CD4-positive, alpha-beta memory T cell (primary cell): ENCODE measurements at regions of chr3 and their contacts with region 1.

Region 1: DNA sequence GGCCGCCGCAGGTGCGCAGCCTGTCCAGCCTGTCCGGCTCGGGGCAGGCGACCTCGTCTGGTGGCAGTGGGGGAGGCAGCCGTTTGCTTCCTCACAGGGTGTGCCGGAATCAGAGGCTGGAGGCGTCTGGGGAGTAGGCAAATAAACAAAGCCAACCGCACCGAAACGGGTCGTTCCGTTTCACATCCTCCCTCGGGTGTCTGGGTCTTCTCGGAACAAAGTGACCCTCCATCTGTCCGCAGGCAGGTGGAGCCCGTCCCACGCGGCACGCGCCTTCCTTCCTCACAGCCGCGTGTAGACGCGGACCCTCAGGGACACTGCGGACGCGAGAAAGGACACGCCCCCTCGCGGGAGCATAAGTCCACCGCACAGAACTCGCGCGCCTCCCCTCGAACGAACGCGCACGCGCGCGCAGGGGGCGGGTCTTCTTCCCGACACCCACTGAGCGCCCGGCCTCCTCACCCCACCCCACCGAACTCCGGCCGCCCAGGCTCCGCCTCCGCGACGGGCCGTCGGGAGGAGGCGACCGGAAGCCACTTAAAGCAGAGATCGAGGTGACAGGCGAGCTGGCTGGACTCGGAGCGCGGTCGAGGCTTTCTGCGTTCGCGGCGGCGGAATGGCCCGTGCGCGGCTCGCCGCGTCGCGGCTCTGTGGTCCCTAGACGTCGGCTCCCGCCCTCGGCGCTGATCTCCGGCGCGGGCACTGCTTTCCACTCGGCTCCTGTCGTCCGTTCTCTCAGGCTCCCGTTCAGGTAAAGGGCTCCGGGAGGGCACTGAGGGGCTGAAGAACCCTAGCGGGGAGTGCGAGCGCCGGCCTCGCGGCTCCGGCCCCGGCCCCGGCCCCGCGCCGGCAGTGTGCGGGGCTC is at the start of gene TIPARP:
- DNase-seq: peak; percentile 97 to 100 (median 99)
- H3K4me3 ChIP-seq: peak within 1 kb of the TSS; percentile 76 to 91
- H3K4me3 Mint-ChIP-seq: peak within 1 kb of the TSS; percentile 93 to 99 (median 96)
- H3K27ac ChIP-seq: peak within 1 kb of the TSS; percentile 94
- H3K27ac Mint-ChIP-seq: peak within 1 kb of the TSS; percentile 95 to 100 (median 99)
- H3K4me1 ChIP-seq: peaks cover 43% of the 10 kb centered on the region
- H3K4me1 Mint-ChIP-seq: peaks cover 32 to 46% (median 37%) of the 10 kb centered on the region in 4 donors
- H3K27me3 ChIP-seq: no peaks in the 10 kb centered on the region
- H3K27me3 Mint-ChIP-seq: no peaks in the 10 kb centered on the region
- total RNA-seq, gene TIPARP: 108 to 119 TPM

Region 2: DNA sequence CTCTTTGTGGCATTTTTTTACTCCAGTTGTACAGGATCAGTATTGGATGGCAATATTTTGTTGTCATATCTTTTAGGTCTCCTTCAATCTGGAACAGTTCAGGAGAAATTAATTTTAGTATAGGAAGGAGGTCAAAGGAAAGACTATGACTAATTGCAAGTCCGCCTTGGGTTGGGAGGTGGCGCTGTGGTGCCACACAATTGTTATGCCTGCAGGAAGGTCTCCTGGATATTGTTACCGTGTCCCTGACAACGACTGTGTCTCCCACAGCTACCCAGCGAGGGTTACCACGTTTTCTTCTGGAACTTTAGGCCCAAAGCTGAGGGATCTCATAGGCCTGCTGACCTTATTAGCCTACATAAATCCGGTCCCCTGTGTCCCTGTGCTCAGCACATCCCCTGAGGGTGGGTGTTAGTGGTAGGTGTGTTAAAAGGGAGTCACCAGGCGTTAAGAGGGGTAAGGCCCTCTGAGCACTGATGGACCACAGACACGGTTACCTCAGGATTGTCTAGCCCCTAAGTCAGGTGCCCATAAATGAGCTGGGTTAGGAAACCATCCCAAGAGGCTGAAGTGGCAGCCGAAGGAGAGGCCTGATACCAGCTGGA is 522.4 kb before region 1 on chr3:
- CTCF ChIA-PET with region 1: interaction called, 4 read pairs
- POLR2A ChIA-PET with region 1: no interaction called
- intact Hi-C with region 1: loop called (anchors 5 kb)
- DNase-seq: peak; percentile 40 to 56 (median 45)
- H3K4me3 ChIP-seq: no peak overlapping the region
- H3K4me3 Mint-ChIP-seq: no peak overlapping the region
- H3K27ac ChIP-seq: no peak overlapping the region
- H3K27ac Mint-ChIP-seq: peak overlapping the region in 2 of 7 donors; percentile 31 to 63
- H3K4me1 ChIP-seq: no peaks in the 10 kb centered on the region
- H3K4me1 Mint-ChIP-seq: peaks cover 0 to 1% (median under 1%) of the 10 kb centered on the region in 4 donors
- H3K27me3 ChIP-seq: no peaks in the 10 kb centered on the region
- H3K27me3 Mint-ChIP-seq: peaks cover 0 to 1% of the 10 kb centered on the region in 2 donors

Region 3: DNA sequence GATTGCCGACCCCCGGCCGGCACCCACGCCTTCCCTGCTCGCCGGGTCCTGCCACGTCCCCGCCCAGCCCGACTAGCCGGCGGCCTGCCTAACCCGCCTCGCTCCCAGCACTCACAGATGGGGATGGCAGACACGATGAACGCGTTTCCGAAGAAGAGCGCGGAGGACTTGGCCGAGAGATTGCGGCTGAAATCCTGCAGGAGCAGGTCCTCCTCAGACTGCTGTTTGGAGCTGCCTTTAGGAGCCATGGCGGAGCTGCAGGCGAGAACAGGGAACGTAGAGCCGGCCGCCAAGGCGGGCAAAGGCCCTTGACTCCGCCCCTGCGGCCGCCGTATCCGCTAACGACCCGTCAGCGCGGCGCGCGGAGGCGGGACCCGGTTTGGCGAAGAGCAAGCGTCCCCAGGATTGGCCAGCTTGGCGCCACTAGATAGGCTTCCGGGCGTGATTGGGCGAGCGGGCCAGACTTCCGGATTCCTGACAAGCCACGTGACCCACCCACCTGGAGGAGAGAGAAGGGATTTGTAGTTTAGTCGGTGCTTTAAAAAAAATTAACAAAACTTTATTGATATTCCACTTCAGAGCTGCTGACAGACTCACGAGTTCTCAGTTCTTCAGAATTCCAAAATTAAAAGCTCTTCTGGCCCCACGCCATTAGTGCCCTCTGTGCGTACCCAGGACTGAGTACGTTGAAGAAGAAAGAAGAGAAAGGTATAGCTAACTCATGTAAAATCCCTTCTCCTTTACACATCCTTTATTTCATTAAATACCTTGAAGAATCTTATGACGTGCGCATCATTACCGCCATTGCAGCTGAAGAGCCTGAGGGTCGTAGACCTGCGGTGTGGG is 119.2 kb before region 1 on chr3 and contains the start of gene SSR3:
- CTCF ChIA-PET with region 1: interaction called, 30 read pairs
- POLR2A ChIA-PET with region 1: interaction called, 140 read pairs
- intact Hi-C with region 1: loop called (anchors 1 kb)
- DNase-seq: peak; percentile 97 to 99 (median 99)
- H3K4me3 ChIP-seq: peak within 1 kb of the TSS; percentile 67 to 97
- H3K4me3 Mint-ChIP-seq: peak within 1 kb of the TSS; percentile 89 to 99 (median 98)
- H3K27ac ChIP-seq: peak within 1 kb of the TSS; percentile 72
- H3K27ac Mint-ChIP-seq: peak within 1 kb of the TSS; percentile 94 to 98 (median 95)
- H3K4me1 ChIP-seq: peaks cover 40% of the 10 kb centered on the region
- H3K4me1 Mint-ChIP-seq: peaks cover 31 to 55% (median 42%) of the 10 kb centered on the region in 4 donors
- H3K27me3 ChIP-seq: no peaks in the 10 kb centered on the region
- H3K27me3 Mint-ChIP-seq: peaks cover 0 to 5% of the 10 kb centered on the region in 2 donors
- total RNA-seq, gene SSR3: 132 to 138 TPM

Region 4: DNA sequence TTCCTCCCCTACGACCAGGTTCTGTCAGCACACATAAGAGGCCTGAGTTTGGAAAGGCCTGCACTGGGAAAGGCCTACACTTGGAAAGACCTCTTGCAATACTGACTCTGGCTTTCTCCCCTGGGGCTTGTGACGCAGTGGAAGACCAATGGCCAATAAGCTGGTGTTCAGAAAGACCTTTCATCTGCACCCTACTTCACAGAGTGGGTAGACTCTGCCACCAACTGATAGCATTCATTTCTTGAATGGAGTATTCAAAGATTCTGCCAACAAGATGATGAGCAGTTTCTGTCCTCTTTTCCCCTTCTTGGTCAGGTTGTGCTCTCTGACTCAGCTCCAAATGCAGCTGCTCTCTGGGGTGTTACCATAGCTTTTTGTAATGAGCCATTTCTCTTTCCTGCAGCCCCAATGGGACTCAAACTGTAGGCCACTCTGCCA is 48.9 kb after region 1 on chr3:
- CTCF ChIA-PET with region 1: no interaction called
- POLR2A ChIA-PET with region 1: no interaction called
- intact Hi-C with region 1: no loop called
- DNase-seq: no peak
- H3K4me3 ChIP-seq: no peak overlapping the region
- H3K4me3 Mint-ChIP-seq: no peak overlapping the region
- H3K27ac ChIP-seq: no peak overlapping the region
- H3K27ac Mint-ChIP-seq: no peak overlapping the region
- H3K4me1 ChIP-seq: no peaks in the 10 kb centered on the region
- H3K4me1 Mint-ChIP-seq: peaks cover 0 to 2% (median under 1%) of the 10 kb centered on the region in 4 donors
- H3K27me3 ChIP-seq: no peaks in the 10 kb centered on the region
- H3K27me3 Mint-ChIP-seq: no peaks in the 10 kb centered on the region

Region 5: DNA sequence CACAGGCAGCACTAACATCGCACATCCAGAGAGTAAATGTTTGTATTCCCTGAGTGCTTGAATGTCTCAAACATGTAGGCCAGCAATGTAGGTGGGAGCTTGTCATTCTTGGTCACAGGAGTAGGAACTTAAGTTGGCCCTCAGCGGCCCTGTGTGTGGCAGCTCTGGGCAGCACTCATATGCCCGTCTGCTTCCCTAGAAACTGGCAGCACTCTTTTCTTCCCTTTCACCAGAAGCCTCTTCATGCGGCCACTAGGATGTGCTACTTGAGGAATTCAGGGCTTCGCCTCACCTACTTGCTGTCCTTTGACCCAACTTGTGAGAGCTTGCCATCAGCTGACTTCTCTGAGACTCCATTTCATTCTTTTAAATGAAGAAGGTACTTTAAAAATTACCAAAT is 69.6 kb after region 1 on chr3:
- CTCF ChIA-PET with region 1: no interaction called
- POLR2A ChIA-PET with region 1: no interaction called
- intact Hi-C with region 1: no loop called
- DNase-seq: no peak
- H3K4me3 ChIP-seq: no peak overlapping the region
- H3K4me3 Mint-ChIP-seq: no peak overlapping the region
- H3K27ac ChIP-seq: no peak overlapping the region
- H3K27ac Mint-ChIP-seq: no peak overlapping the region
- H3K4me1 ChIP-seq: no peaks in the 10 kb centered on the region
- H3K4me1 Mint-ChIP-seq: no peaks in the 10 kb centered on the region
- H3K27me3 ChIP-seq: no peaks in the 10 kb centered on the region
- H3K27me3 Mint-ChIP-seq: no peaks in the 10 kb centered on the region

Region 6: DNA sequence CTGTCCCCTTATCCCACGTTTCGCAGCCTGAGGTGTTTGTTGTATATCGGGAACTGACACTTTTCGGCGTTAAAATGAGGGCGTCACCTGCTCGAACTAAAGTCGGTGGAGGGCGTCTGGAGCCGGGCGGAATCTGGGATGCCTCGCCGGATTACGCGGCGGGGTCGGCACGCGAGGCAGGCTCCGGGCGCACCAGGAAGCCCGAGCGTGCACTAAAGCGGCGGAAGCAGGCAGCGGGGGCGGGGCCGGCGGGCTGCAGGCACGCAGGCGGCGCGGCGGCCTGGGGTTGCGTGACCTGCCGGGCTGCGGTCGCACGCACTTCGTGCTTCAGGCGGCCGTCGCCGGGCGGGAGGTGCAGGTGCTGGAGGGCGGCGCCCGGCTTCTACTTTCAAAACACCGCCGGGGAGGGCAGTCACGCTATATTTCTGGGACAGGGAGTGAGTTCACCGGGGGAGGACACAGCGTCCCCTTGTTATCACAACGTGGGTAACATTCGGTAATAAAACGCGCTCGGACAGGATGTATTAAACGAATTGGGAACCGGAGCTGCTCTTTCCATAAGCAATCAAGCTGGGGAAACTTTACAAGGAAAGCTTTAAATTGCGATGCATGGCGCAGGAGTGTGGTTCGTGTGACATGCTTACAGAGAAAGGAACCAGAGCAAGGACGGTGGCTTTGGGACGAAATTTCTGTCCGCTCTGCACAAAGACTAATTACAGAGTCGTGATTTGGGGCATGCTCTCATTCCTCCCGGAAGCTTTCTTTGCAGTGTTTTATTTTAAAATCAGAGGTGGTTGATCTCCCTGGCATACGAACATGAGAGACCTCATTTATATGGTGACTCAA is 142.7 kb after region 1 on chr3:
- CTCF ChIA-PET with region 1: interaction called, 8 read pairs
- POLR2A ChIA-PET with region 1: interaction called, 90 read pairs
- intact Hi-C with region 1: loop called (anchors 1 kb)
- DNase-seq: peak; percentile 79 to 85 (median 84)
- H3K4me3 ChIP-seq: peak overlapping the region; percentile 43 to 59
- H3K4me3 Mint-ChIP-seq: peak overlapping the region; percentile 91 to 97 (median 96)
- H3K27ac ChIP-seq: peak overlapping the region; percentile 73
- H3K27ac Mint-ChIP-seq: peak overlapping the region; percentile 91 to 98 (median 94)
- H3K4me1 ChIP-seq: peaks cover 39% of the 10 kb centered on the region
- H3K4me1 Mint-ChIP-seq: peaks cover 22 to 45% (median 35%) of the 10 kb centered on the region in 4 donors
- H3K27me3 ChIP-seq: no peaks in the 10 kb centered on the region
- H3K27me3 Mint-ChIP-seq: no peaks in the 10 kb centered on the region

Region 7: GRCh38 chr3:157088601-157089454 is 414.6 kb after region 1 on chr3:
- CTCF ChIA-PET with region 1: interaction called, 40 read pairs
- POLR2A ChIA-PET with region 1: interaction called, 94 read pairs
- intact Hi-C with region 1: loop called (anchors 1 kb)
- DNase-seq: peak; percentile 94 to 95 (median 94)
- H3K4me3 ChIP-seq: peak overlapping the region; percentile 49 to 76
- H3K4me3 Mint-ChIP-seq: peak overlapping the region; percentile 79 to 93 (median 89)
- H3K27ac ChIP-seq: peak overlapping the region; percentile 91
- H3K27ac Mint-ChIP-seq: peak overlapping the region; percentile 99 to 100 (median 99)
- H3K4me1 ChIP-seq: peaks cover 41% of the 10 kb centered on the region
- H3K4me1 Mint-ChIP-seq: peaks cover 30 to 50% (median 41%) of the 10 kb centered on the region in 4 donors
- H3K27me3 ChIP-seq: no peaks in the 10 kb centered on the region
- H3K27me3 Mint-ChIP-seq: no peaks in the 10 kb centered on the region

Region 8: GRCh38 chr3:157174649-157175498 is 500.6 kb after region 1 on chr3:
- CTCF ChIA-PET with region 1: no interaction called
- POLR2A ChIA-PET with region 1: interaction called, 28 read pairs
- intact Hi-C with region 1: loop called (anchors 1 kb)
- DNase-seq: peak; percentile 95 to 99 (median 99)
- H3K4me3 ChIP-seq: peak overlapping the region; percentile 82 to 95
- H3K4me3 Mint-ChIP-seq: peak overlapping the region; percentile 85 to 96 (median 93)
- H3K27ac ChIP-seq: peak overlapping the region; percentile 94
- H3K27ac Mint-ChIP-seq: peak overlapping the region; percentile 94 to 99 (median 98)
- H3K4me1 ChIP-seq: peaks cover 22% of the 10 kb centered on the region
- H3K4me1 Mint-ChIP-seq: peaks cover 10 to 30% (median 21%) of the 10 kb centered on the region in 4 donors
- H3K27me3 ChIP-seq: no peaks in the 10 kb centered on the region
- H3K27me3 Mint-ChIP-seq: no peaks in the 10 kb centered on the region

Region 9: GRCh38 chr3:158074591-158074990 is 1400.3 kb after region 1 on chr3:
- CTCF ChIA-PET with region 1: no interaction called
- POLR2A ChIA-PET with region 1: no interaction called
- intact Hi-C with region 1: no loop called
- DNase-seq: no peak
- H3K4me3 ChIP-seq: no peak overlapping the region
- H3K4me3 Mint-ChIP-seq: no peak overlapping the region
- H3K27ac ChIP-seq: no peak overlapping the region
- H3K27ac Mint-ChIP-seq: no peak overlapping the region
- H3K4me1 ChIP-seq: no peaks in the 10 kb centered on the region
- H3K4me1 Mint-ChIP-seq: no peaks in the 10 kb centered on the region
- H3K27me3 ChIP-seq: no peaks in the 10 kb centered on the region
- H3K27me3 Mint-ChIP-seq: peaks cover 4 to 15% of the 10 kb centered on the region in 2 donors